Endothelial cell of umbilical vein (primary cell): ENCODE measurements at regions of chr11 and their contacts with region 1.

Region 1: DNA sequence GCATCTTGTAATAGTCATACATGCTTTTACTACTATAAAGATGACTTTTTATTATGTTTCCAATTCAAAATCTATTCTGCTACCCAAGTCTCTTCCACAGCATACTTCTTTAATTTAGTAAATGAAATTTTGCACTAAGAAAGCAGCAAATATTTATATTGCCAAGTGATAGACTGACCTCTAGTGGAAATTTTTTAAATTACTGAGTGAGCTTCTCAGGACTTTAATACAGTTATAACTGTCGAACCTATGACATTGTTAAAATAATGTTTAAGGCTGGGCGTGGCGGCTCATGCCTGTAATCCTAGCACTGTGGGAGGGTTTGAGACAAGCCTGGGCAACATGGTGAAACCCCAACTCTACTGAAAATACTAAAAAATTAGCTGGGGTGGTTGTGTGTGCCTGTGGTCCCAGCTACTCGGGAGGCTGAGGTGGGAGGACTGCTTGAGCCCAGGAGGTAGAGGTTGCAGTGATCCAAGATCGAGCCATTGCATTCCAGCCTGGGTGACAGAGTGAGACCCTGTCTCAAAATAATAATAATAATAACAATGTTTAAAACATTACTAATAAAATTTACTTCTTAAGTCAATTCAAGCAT is 27.3 kb downstream of the STK33 start:
- DNase-seq: peak; percentile 50
- H3K4me3 ChIP-seq: no peak overlapping the region
- H3K27ac ChIP-seq: no peak overlapping the region
- H3K4me1 ChIP-seq: peaks cover 3% of the 10 kb centered on the region
- H3K27me3 ChIP-seq: peaks cover 6 to 7% of the 10 kb centered on the region in 2 experiments
- CTCF ChIP-seq: peak; percentile 19 to 28
- POLR2A ChIP-seq: no peak

Region 2: GRCh38 chr11:8006349-8006977 is 560.2 kb before region 1 on chr11:
- CTCF ChIA-PET with region 1: interaction called, 10 read pairs
- POLR2A ChIA-PET with region 1: no interaction called
- dilution Hi-C with region 1: no loop called
- intact Hi-C with region 1: loop called (anchors 2 kb)
- DNase-seq: peak; percentile 61
- H3K4me3 ChIP-seq: no peak overlapping the region
- H3K27ac ChIP-seq: no peak overlapping the region
- H3K4me1 ChIP-seq: no peaks in the 10 kb centered on the region
- H3K27me3 ChIP-seq: peaks cover 0 to 2% of the 10 kb centered on the region in 2 experiments
- CTCF ChIP-seq: peak; percentile 83
- POLR2A ChIP-seq: no peak

Region 3: GRCh38 chr11:8219257-8220021 is 347.3 kb before region 1 on chr11:
- CTCF ChIA-PET with region 1: interaction called, 39 read pairs
- POLR2A ChIA-PET with region 1: no interaction called
- dilution Hi-C with region 1: no loop called
- intact Hi-C with region 1: no loop called
- DNase-seq: peak; percentile 47
- H3K4me3 ChIP-seq: no peak overlapping the region
- H3K27ac ChIP-seq: no peak overlapping the region
- H3K4me1 ChIP-seq: no peaks in the 10 kb centered on the region
- H3K27me3 ChIP-seq: peaks cover 0 to 6% of the 10 kb centered on the region in 2 experiments
- CTCF ChIP-seq: peak; percentile 63 to 76
- POLR2A ChIP-seq: no peak

Region 4: GRCh38 chr11:8247312-8247711 is 319.4 kb before region 1 on chr11:
- CTCF ChIA-PET with region 1: interaction called, 23 read pairs
- POLR2A ChIA-PET with region 1: no interaction called
- dilution Hi-C with region 1: no loop called
- intact Hi-C with region 1: loop called (anchors 1 kb)
- DNase-seq: no peak
- H3K4me3 ChIP-seq: no peak overlapping the region
- H3K27ac ChIP-seq: no peak overlapping the region
- H3K4me1 ChIP-seq: peaks cover 3% of the 10 kb centered on the region
- H3K27me3 ChIP-seq: peaks cover 3% of the 10 kb centered on the region in 2 experiments
- CTCF ChIP-seq: peak; percentile 48 to 51
- POLR2A ChIP-seq: no peak

Region 5: DNA sequence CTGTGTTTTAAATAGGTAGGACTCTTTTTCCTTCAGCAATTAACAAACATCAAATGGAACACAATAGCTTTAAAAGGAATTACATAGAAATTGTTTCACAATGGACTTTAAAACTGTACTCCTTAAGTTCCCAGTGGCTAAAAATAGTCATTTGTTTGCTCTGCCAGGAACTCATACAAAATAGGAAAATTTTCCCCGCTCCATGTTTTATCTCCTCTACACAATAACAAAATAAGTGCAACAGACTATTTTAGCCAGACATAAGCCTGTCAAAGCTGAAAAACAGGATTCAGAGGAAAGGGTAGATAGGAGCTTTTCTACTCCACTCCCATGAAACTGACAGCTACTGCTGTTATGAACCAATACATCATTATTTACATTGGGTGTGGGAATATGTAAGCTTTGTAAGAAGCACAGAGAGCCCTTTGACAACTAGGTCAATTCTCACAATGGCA is 62.8 kb before region 1 on chr11:
- CTCF ChIA-PET with region 1: no interaction called
- POLR2A ChIA-PET with region 1: no interaction called
- dilution Hi-C with region 1: no loop called
- intact Hi-C with region 1: no loop called
- DNase-seq: no peak
- H3K4me3 ChIP-seq: no peak overlapping the region
- H3K27ac ChIP-seq: no peak overlapping the region
- H3K4me1 ChIP-seq: no peaks in the 10 kb centered on the region
- H3K27me3 ChIP-seq: no peaks in the 10 kb centered on the region
- CTCF ChIP-seq: no peak
- POLR2A ChIP-seq: no peak

Region 6: GRCh38 chr11:8577791-8578581 is 11.3 kb after region 1 on chr11:
- CTCF ChIA-PET with region 1: interaction called, 20 read pairs
- POLR2A ChIA-PET with region 1: no interaction called
- dilution Hi-C with region 1: no loop called
- intact Hi-C with region 1: no loop called
- DNase-seq: no peak
- H3K4me3 ChIP-seq: no peak overlapping the region
- H3K27ac ChIP-seq: no peak overlapping the region
- H3K4me1 ChIP-seq: no peaks in the 10 kb centered on the region
- H3K27me3 ChIP-seq: no peaks in the 10 kb centered on the region
- CTCF ChIP-seq: no peak
- POLR2A ChIP-seq: no peak

Region 7: GRCh38 chr11:8754241-8754640 is 187.5 kb after region 1 on chr11:
- CTCF ChIA-PET with region 1: no interaction called
- POLR2A ChIA-PET with region 1: no interaction called
- dilution Hi-C with region 1: no loop called
- intact Hi-C with region 1: no loop called
- DNase-seq: no peak
- H3K4me3 ChIP-seq: no peak overlapping the region
- H3K27ac ChIP-seq: no peak overlapping the region
- H3K4me1 ChIP-seq: no peaks in the 10 kb centered on the region
- H3K27me3 ChIP-seq: no peaks in the 10 kb centered on the region
- CTCF ChIP-seq: no peak
- POLR2A ChIP-seq: no peak